PC-3 (cell line): ENCODE measurements at regions of chr9 and their contacts with region 1.

Region 1: DNA sequence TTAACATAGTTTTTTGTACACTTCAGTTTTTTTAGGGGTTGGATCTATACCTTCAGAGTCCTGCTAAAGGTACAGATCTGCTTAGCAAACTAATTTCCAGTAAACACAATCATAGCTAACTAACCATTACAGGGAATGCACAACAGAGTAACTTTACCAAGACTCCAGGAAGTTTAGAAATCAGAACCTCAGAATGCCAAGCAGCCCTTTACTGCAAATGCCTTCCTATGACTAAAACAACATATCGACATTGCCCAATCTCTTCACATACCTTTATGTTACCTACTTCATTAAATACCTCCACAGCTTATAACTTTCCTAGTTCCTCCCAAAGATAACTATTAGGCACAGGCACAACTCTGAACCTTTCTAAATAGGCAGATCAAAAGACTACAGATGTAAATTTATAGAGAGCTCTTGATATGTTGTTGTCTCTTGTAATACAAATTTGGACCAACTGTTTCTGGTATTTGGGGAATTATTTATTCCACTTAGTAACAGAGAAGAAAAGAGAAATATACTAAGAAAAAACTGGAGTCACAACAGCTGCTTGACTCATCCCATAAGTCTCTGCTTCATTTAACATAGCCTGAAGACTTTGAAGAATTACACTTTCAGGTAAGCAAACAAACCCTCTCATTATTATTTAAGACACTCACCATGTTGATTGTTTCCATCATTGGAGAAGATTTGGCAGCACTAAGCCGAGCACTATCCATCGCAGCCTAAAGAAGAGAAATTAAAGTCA is 46.0 kb upstream of the OR2K2 start:
- DNase-seq: peak; percentile 62
- ATAC-seq: peak; percentile 64
- H3K4me3 ChIP-seq: peak overlapping the region; percentile 24; the same call in 1 of the 2 replicates
- H3K27ac ChIP-seq: peak overlapping the region; percentile 83
- H3K4me1 ChIP-seq: peaks cover 27% of the 10 kb centered on the region
- H3K27me3 ChIP-seq: no peaks in the 10 kb centered on the region
- CTCF ChIP-seq: no peak

Region 2: GRCh38 chr9:111348821-111349271 is 27.1 kb before region 1 on chr9:
- CTCF ChIA-PET with region 1: no interaction called
- POLR2A ChIA-PET with region 1: no interaction called
- intact Hi-C with region 1: loop called (anchors 1 kb)
- DNase-seq: peak; percentile 88
- ATAC-seq: peak; percentile 76
- H3K4me3 ChIP-seq: no peak overlapping the region; the same call in 1 of the 2 replicates
- H3K27ac ChIP-seq: peak overlapping the region; percentile 98
- H3K4me1 ChIP-seq: peaks cover 31% of the 10 kb centered on the region
- H3K27me3 ChIP-seq: no peaks in the 10 kb centered on the region
- CTCF ChIP-seq: no peak